ENCODE measurements at regions of chr5 and their contacts with region 1.

Region 1: GRCh38 chr5:39217365-39218281 is 1.7 kb downstream of the FYB1 start:
- DNase-seq: peak; percentile 87
- ATAC-seq: peak; percentile 74
- H3K4me3 Mint-ChIP-seq: peak overlapping the region; percentile 77
- H3K27ac Mint-ChIP-seq: peak overlapping the region; percentile 97
- H3K4me1 Mint-ChIP-seq: peaks cover 86% of the 10 kb centered on the region
- H3K27me3 Mint-ChIP-seq: no peaks in the 10 kb centered on the region

Region 2: GRCh38 chr5:39148983-39149534 is 68.6 kb before region 1 on chr5:
- CTCF ChIA-PET with region 1: interaction called, 57 read pairs
- POLR2A ChIA-PET with region 1: no interaction called
- intact Hi-C with region 1: loop called (anchors 1 to 2 kb)
- DNase-seq: no peak
- ATAC-seq: no peak
- H3K4me3 Mint-ChIP-seq: no peak overlapping the region
- H3K27ac Mint-ChIP-seq: peak overlapping the region; percentile 85
- H3K4me1 Mint-ChIP-seq: peaks cover 75% of the 10 kb centered on the region
- H3K27me3 Mint-ChIP-seq: no peaks in the 10 kb centered on the region

Region 3: DNA sequence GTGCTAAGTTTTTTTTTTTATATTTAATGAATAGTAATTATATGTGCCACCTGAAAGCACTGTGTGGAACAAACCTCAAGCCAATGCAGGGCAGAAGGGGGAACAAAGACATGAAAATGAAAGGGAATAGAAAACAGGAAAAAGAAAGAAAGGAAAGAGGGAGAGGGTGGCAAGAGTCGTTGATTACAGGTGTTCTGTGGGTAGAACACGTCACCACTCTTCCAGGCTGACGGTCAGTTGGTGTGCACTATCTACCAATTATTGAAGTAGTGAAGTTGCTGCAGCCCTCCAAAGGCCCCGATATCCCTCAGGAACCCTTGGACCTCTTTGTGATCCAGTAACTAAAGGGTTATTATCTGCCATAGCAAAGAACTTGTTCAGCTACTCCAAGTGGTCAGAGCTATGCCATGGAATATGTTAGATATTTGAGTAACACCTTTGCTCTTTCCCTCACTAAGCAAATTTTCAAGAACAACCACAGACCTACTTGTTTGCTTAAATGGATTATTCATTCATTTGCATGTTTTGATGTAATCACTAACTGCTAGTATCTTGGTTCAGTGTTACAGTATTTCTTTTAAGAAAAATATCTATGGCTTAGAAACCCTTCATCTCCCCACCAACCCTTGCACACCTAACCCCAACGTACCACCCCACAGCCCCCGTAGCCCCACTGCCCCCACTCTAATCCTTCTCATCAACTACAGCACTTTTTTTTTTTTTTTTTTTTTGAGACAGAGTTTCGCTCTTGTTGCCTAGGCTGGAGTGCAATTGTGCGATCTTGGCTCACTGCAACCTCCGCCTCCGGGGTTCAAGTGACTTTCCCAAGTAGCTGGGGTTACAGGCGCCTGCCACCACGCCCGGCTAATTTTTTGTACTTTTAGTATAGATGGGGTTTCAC is 29.5 kb before region 1 on chr5:
- CTCF ChIA-PET with region 1: interaction called, 31 read pairs
- POLR2A ChIA-PET with region 1: interaction called, 3 read pairs
- intact Hi-C with region 1: no loop called
- DNase-seq: peak; percentile 45
- ATAC-seq: peak; percentile 38
- H3K4me3 Mint-ChIP-seq: peak overlapping the region; percentile 59
- H3K27ac Mint-ChIP-seq: peak overlapping the region; percentile 92
- H3K4me1 Mint-ChIP-seq: peaks cover 88% of the 10 kb centered on the region
- H3K27me3 Mint-ChIP-seq: no peaks in the 10 kb centered on the region

Region 4: DNA sequence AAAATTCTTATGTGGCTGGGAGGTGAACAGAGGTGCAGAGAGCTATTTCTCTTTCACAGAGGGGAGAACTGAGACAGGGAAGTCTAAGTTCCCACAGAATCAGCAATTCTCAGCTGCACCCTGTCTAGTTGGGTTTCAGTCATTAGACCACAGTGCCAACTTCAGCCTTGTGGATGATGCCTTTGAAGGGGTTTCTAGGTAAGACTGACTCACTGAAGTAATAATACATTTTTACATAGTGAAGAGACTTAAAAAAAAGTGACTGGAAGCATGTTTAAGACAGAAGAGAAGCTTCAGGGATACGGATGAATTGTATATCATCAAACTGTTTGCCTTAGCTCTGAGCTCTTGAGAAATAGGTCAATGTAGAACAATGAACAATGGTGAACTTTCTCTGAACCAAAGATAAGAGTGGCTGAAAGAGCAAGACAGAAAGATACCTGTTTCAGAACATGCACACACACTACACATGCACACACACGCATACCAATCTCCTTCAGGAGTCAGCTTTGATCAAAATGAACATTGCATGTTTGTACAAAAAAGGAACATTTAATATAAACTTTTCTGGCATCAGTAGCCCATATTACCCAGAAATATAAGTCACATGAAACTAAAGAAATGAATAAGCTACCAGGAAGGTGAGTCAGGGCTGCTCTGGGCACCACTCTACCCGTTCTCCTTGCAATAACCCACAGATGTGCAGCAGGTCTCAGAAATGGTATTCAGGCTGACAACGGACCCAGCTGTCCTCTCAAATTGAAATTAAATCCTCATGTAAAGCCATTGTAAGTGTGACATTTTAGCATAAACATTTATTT is 14.3 kb after region 1 on chr5:
- CTCF ChIA-PET with region 1: interaction called, 104 read pairs
- POLR2A ChIA-PET with region 1: interaction called, 18 read pairs
- intact Hi-C with region 1: loop called (anchors 1 to 2 kb)
- DNase-seq: peak; percentile 76
- ATAC-seq: peak; percentile 93
- H3K4me3 Mint-ChIP-seq: peak overlapping the region; percentile 59
- H3K27ac Mint-ChIP-seq: peak overlapping the region; percentile 94
- H3K4me1 Mint-ChIP-seq: peaks cover 13% of the 10 kb centered on the region
- H3K27me3 Mint-ChIP-seq: no peaks in the 10 kb centered on the region

Region 5: GRCh38 chr5:39283231-39283818 is 65.7 kb after region 1 on chr5:
- CTCF ChIA-PET with region 1: interaction called, 165 read pairs
- POLR2A ChIA-PET with region 1: interaction called, 4 read pairs
- intact Hi-C with region 1: loop called (anchors 1 kb)
- DNase-seq: peak; percentile 72
- ATAC-seq: peak; percentile 99
- H3K4me3 Mint-ChIP-seq: no peak overlapping the region
- H3K27ac Mint-ChIP-seq: peak overlapping the region; percentile 91
- H3K4me1 Mint-ChIP-seq: peaks cover 45% of the 10 kb centered on the region
- H3K27me3 Mint-ChIP-seq: peaks cover 2% of the 10 kb centered on the region

Region 6: DNA sequence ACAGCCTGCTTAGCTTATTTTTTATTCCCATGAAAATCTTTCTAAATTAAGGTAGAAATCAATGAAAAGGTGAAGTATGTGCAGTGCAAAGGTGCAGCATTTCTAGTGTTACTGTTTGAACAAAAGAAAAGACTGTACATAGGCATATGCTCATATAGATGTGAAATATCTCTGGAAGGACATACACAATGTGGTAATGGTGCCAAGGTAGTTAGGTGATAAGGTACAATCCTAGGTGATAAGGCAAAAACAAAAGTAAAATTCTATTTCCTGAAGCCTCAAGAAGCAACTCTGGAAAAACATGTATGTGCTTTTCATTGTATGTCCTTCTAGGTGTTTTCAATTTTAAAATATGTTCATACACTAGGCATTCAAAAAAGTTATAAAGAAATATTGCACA is 1322.7 kb after region 1 on chr5:
- CTCF ChIA-PET with region 1: no interaction called
- POLR2A ChIA-PET with region 1: no interaction called
- intact Hi-C with region 1: no loop called
- DNase-seq: no peak
- ATAC-seq: no peak
- H3K4me3 Mint-ChIP-seq: no peak overlapping the region
- H3K27ac Mint-ChIP-seq: no peak overlapping the region
- H3K4me1 Mint-ChIP-seq: no peaks in the 10 kb centered on the region
- H3K27me3 Mint-ChIP-seq: no peaks in the 10 kb centered on the region